ENCODE measurements at regions of chr14 and their contacts with region 1.

Region 1: GRCh38 chr14:37594238-37594914 is 673 bp downstream of the FOXA1 start:
- DNase-seq: peak; percentile 99
- ATAC-seq: peak; percentile 19
- H3K4me3 ChIP-seq: peak overlapping the region; percentile 87 to 96 (median 95)
- H3K27ac ChIP-seq: peak overlapping the region; percentile 96
- H3K4me1 ChIP-seq: peaks cover 43% of the 10 kb centered on the region
- H3K27me3 ChIP-seq: no peaks in the 10 kb centered on the region; a peak in 1 of 5 replicates
- CTCF ChIP-seq: peak; percentile 95
- EP300 ChIP-seq: peak in 1 of 2 experiments; percentile 23; a peak in 1 of 4 replicates
- POLR2A ChIP-seq: no peak
- RAD21 ChIP-seq: peak; percentile 88

Region 2: DNA sequence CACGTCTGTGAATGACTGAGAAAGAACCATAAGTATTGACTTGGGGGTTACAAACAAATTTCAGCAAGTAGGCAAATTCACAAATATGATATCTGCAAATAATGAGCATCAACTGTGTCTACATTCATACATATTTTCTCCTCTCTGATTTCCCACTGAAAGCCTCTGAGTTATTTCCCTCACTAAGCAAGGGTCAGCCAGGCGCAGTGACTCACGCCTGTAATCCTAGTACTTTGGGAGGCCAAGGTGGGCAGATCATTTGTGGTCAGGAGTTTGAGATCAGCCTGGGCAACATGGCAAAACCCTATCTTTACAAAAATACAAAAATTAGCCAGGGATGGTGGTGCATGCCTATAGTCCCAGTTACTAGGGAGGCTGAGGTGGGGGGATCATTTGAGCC is 502.7 kb before region 1 on chr14:
- CTCF ChIA-PET with region 1: no interaction called
- POLR2A ChIA-PET with region 1: no interaction called
- in situ Hi-C with region 1: no loop called
- intact Hi-C with region 1: no loop called
- DNase-seq: no peak
- ATAC-seq: no peak; the same call in 2 of the 3 replicates
- H3K4me3 ChIP-seq: no peak overlapping the region
- H3K27ac ChIP-seq: no peak overlapping the region
- H3K4me1 ChIP-seq: no peaks in the 10 kb centered on the region
- H3K27me3 ChIP-seq: no peaks in the 10 kb centered on the region
- CTCF ChIP-seq: no peak
- EP300 ChIP-seq: no peak
- POLR2A ChIP-seq: no peak
- RAD21 ChIP-seq: no peak

Region 3: GRCh38 chr14:37237094-37237493 is 357.3 kb before region 1 on chr14:
- CTCF ChIA-PET with region 1: interaction called, 6 read pairs
- POLR2A ChIA-PET with region 1: interaction called, 25 read pairs
- in situ Hi-C with region 1: no loop called
- intact Hi-C with region 1: no loop called
- DNase-seq: no peak
- ATAC-seq: peak; percentile 70
- H3K4me3 ChIP-seq: no peak overlapping the region
- H3K27ac ChIP-seq: peak overlapping the region; percentile 39
- H3K4me1 ChIP-seq: peaks cover 27% of the 10 kb centered on the region
- H3K27me3 ChIP-seq: no peaks in the 10 kb centered on the region
- CTCF ChIP-seq: no peak
- EP300 ChIP-seq: no peak
- POLR2A ChIP-seq: no peak
- RAD21 ChIP-seq: no peak

Region 4: GRCh38 chr14:37329189-37330001 is 265.0 kb before region 1 on chr14:
- CTCF ChIA-PET with region 1: no interaction called
- POLR2A ChIA-PET with region 1: interaction called, 16 read pairs
- in situ Hi-C with region 1: no loop called
- intact Hi-C with region 1: loop called (anchors 1 kb)
- DNase-seq: peak; percentile 92
- ATAC-seq: peak; percentile 98
- H3K4me3 ChIP-seq: peak overlapping the region in 2 of 3 experiments; percentile 23 to 26; a peak in 3 of 6 replicates
- H3K27ac ChIP-seq: peak overlapping the region; percentile 57
- H3K4me1 ChIP-seq: peaks cover 30% of the 10 kb centered on the region
- H3K27me3 ChIP-seq: no peaks in the 10 kb centered on the region
- CTCF ChIP-seq: no peak
- EP300 ChIP-seq: peak; percentile 41 to 91; a peak in 3 of 4 replicates
- POLR2A ChIP-seq: no peak
- RAD21 ChIP-seq: no peak

Region 5: DNA sequence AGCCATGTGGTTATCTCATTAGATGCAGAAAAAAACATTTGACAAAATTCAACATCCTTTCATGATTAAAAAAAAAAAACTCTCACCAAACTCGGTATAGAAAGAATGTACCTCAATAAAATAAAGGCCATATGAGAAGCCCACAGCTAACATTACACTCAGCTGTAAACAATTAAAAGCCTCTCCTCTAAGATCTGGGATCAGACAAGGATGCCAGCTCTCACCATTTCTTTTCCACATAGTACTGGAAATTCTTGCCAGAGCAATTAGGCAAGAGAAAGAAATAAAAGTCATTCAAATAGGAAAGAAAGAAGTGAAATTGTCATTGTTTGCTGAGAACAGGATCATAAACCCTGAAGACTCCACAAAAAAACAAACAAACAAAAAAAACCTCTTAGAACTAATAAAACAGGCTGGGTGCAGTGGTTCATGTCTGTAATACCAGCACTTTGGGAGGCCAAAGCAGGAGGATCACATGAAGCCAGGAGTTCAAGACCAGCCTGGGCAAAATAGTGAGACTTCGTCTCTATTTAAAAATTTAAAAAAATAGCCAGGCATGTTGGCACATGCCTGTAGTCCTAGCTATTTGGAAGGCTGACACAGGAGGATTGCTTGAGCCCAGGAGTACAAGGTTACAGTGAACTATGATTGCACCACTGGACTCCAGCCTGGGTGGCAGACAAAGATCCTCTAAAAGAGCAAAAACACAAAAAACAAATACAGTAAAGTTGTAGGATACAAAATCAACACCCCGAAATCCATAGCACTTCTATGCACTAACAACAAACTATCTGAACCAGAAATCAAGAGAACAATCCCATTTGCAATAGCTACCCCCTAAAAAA is 113.7 kb before region 1 on chr14:
- CTCF ChIA-PET with region 1: no interaction called
- POLR2A ChIA-PET with region 1: no interaction called
- in situ Hi-C with region 1: no loop called
- intact Hi-C with region 1: loop called (anchors 5 kb)
- DNase-seq: peak; percentile 85
- ATAC-seq: peak; percentile 95
- H3K4me3 ChIP-seq: no peak overlapping the region
- H3K27ac ChIP-seq: peak overlapping the region; percentile 51
- H3K4me1 ChIP-seq: peaks cover 25% of the 10 kb centered on the region
- H3K27me3 ChIP-seq: no peaks in the 10 kb centered on the region
- CTCF ChIP-seq: no peak
- EP300 ChIP-seq: peak in 1 of 2 experiments; percentile 84; a peak in 2 of 4 replicates
- POLR2A ChIP-seq: no peak
- RAD21 ChIP-seq: no peak

Region 6: GRCh38 chr14:37583359-37584231 is 10.8 kb before region 1 on chr14:
- CTCF ChIA-PET with region 1: no interaction called
- POLR2A ChIA-PET with region 1: interaction called, 27 read pairs
- in situ Hi-C with region 1: no loop called
- intact Hi-C with region 1: no loop called
- DNase-seq: peak; percentile 54
- ATAC-seq: peak; percentile 64
- H3K4me3 ChIP-seq: peak overlapping the region; percentile 46 to 70 (median 68); a peak in 5 of 6 replicates
- H3K27ac ChIP-seq: peak overlapping the region; percentile 43
- H3K4me1 ChIP-seq: peaks cover 24% of the 10 kb centered on the region
- H3K27me3 ChIP-seq: no peaks in the 10 kb centered on the region; a peak in 1 of 5 replicates
- CTCF ChIP-seq: peak; percentile 32; the same call in 1 of the 2 replicates
- EP300 ChIP-seq: no peak
- POLR2A ChIP-seq: peak in 1 of 2 experiments; percentile 41; a peak in 2 of 4 replicates
- RAD21 ChIP-seq: peak; percentile 48

Region 7: DNA sequence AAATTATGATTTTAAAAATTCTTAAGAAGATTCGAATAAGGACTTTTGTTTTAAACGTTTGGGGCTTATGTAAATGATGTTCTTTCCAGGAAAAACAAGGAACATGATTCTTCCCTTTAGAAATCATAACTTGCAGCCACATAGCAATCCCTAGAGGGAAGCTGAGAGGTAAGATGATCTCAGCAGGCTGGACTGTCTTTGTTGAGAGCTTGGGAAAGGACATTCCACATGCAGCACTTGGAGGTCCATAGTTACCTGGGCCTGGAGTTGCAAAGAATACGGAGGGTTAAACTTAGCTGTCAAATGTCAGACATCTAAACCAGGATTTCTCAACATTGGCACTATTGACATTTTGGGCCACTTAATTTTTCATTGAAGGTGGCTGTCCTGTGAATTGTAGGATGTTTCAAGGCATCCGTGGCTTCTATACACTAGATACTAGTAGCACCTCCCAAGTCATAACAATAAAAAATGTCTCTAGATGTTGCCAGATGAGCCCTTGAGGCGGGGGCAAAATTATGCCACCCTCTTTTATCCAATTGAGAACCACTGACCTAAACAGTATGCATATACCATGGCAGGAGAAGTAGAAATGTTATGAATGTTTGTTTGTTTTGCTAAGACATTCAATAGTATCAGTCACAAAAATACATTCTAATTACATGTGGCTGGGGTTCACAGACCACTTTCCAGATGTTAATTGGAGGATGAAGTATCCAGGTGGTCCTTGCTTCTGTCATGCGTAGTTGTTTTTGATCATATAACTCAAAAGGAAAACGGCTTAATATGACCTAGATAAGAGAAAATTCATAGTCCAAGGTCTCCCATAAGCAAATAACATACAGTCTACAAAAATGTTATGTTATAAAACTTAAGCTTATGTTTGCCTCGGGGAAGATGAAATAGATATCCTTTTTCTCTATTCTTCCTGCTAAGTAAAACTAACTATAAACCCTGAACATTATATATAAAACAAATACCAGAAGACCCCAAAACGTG is 31.5 kb after region 1 on chr14:
- CTCF ChIA-PET with region 1: no interaction called
- POLR2A ChIA-PET with region 1: interaction called, 16 read pairs
- in situ Hi-C with region 1: no loop called
- intact Hi-C with region 1: no loop called
- DNase-seq: peak; percentile 74
- ATAC-seq: peak; percentile 76
- H3K4me3 ChIP-seq: no peak overlapping the region
- H3K27ac ChIP-seq: peak overlapping the region; percentile 44
- H3K4me1 ChIP-seq: peaks cover 17% of the 10 kb centered on the region
- H3K27me3 ChIP-seq: no peaks in the 10 kb centered on the region
- CTCF ChIP-seq: no peak
- EP300 ChIP-seq: peak in 1 of 2 experiments; percentile 59; a peak in 1 of 4 replicates
- POLR2A ChIP-seq: no peak
- RAD21 ChIP-seq: no peak

Region 8: DNA sequence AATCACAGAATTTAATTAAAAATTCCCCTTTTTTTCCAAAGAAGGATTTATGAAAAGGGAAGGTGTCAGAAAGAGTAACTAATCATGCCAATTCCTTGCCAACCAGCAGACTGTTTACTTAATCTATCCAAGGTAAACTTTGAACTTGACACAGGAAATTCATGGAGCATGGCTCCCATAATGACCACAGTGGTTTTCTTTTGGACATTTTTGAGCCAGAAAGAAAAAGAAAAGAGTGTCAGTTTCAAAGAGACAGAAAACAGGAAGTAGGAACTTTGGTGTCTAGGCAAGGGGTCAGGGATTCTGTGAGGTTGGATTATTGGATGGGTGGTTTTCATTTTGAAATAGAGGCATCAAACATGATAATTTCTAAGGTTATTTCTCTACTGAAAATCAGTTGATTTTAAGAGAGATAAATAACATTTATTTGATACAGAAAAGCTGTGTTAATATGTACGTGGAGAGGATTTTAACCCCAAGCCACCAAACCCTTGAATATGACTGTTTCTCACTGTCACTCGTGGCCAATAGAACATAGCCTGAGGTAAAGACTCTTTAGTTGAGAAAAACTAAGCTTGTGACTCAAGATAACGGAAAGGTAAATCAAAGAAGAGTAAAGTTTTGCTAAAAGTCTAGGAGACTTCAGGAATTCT is 197.1 kb after region 1 on chr14:
- CTCF ChIA-PET with region 1: no interaction called
- POLR2A ChIA-PET with region 1: interaction called, 5 read pairs
- in situ Hi-C with region 1: no loop called
- intact Hi-C with region 1: loop called (anchors 2 kb)
- DNase-seq: peak; percentile 94
- ATAC-seq: peak; percentile 54
- H3K4me3 ChIP-seq: no peak overlapping the region
- H3K27ac ChIP-seq: peak overlapping the region; percentile 55
- H3K4me1 ChIP-seq: peaks cover 39% of the 10 kb centered on the region
- H3K27me3 ChIP-seq: no peaks in the 10 kb centered on the region
- CTCF ChIP-seq: no peak
- EP300 ChIP-seq: peak in 1 of 2 experiments; percentile 96; a peak in 2 of 4 replicates
- POLR2A ChIP-seq: no peak
- RAD21 ChIP-seq: no peak

Measured in HepG2 (cell line).